Right lobe of liver (tissue), 6 donors: ENCODE measurements at regions of chr14 and their contacts with region 1.

Region 1: GRCh38 chr14:78566026-78566858 is 396.1 kb downstream of the NRXN3 start:
- DNase-seq: peak; percentile 64 to 71 (median 70)
- ATAC-seq: peak; percentile 94 to 99 (median 98)
- H3K4me3 ChIP-seq: no peak overlapping the region
- H3K27ac ChIP-seq: no peak overlapping the region
- H3K4me1 ChIP-seq: no peaks in the 10 kb centered on the region
- H3K27me3 ChIP-seq: no peaks in the 10 kb centered on the region
- CTCF ChIP-seq: peak; percentile 53 to 78 (median 68)
- POLR2A ChIP-seq: no peak

Region 2: GRCh38 chr14:77862154-77862786 is 704.0 kb before region 1 on chr14:
- intact Hi-C with region 1: loop called in 1 of 2 experiments (anchors 10 kb)
- DNase-seq: peak; percentile 71 to 78 (median 77)
- ATAC-seq: peak; percentile 66 to 81 (median 76)
- H3K4me3 ChIP-seq: no peak overlapping the region
- H3K27ac ChIP-seq: no peak overlapping the region
- H3K4me1 ChIP-seq: no peaks in the 10 kb centered on the region
- H3K27me3 ChIP-seq: no peaks in the 10 kb centered on the region
- CTCF ChIP-seq: peak; percentile 78 to 95 (median 90)
- POLR2A ChIP-seq: no peak

Region 3: GRCh38 chr14:78383060-78383459 is 183.2 kb before region 1 on chr14:
- intact Hi-C with region 1: no loop called
- DNase-seq: no peak
- ATAC-seq: no peak
- H3K4me3 ChIP-seq: no peak overlapping the region
- H3K27ac ChIP-seq: no peak overlapping the region
- H3K4me1 ChIP-seq: no peaks in the 10 kb centered on the region
- H3K27me3 ChIP-seq: no peaks in the 10 kb centered on the region
- CTCF ChIP-seq: no peak
- POLR2A ChIP-seq: no peak

Region 4: DNA sequence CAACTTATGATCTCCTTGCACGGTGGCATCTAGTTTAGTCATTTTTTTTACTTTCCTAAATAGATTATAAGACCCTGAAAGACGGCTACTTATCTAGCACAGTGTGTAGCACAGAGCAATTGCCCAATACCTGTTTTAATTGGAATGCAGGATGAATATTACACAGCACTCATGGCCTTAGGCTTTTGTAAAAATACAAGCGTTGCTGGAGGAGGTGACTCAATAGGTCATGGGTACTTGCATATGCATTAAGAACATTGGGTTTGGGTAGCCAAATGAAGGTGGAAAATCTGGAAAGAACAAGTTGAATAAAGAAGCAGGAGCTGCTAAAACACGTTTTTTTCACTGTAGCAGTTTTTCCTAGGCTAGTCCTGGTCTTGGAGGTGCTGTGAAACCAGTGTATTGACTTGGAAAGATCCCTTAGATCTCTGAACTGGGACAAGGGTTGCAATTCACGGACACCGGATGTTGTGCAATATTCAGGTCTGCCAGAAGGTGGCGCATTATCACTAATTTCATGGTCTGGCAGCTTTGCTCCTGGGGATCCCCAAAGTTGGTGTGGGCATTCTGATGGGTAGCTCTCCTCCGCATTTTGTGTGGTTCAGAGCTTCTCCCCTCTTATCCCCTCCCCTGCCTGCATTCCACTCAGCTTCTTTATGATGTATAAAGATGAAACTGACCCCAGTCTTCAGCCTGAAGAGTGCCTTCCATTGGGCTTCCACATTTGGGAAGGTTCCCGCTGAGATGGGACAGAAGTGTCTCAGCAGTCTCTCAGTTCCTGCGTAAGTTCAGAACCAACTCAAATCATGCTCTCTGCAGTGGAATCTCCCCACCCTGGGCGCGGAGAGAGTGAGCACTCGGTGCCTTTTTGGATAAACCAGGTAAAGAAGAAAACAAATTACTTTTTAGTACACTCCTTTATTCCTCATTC is 117.8 kb before region 1 on chr14:
- intact Hi-C with region 1: loop called in 1 of 2 experiments (anchors 10 kb)
- DNase-seq: peak in 2 of 3 donors; percentile 27 to 52
- ATAC-seq: peak; percentile 54 to 93 (median 84)
- H3K4me3 ChIP-seq: no peak overlapping the region
- H3K27ac ChIP-seq: no peak overlapping the region
- H3K4me1 ChIP-seq: no peaks in the 10 kb centered on the region
- H3K27me3 ChIP-seq: no peaks in the 10 kb centered on the region
- CTCF ChIP-seq: peak; percentile 49 to 78 (median 60)
- POLR2A ChIP-seq: no peak